Naive thymus-derived CD4-positive, alpha-beta T cell (primary cell): ENCODE measurements at regions of chr14 and their contacts with region 1.

Region 1: DNA sequence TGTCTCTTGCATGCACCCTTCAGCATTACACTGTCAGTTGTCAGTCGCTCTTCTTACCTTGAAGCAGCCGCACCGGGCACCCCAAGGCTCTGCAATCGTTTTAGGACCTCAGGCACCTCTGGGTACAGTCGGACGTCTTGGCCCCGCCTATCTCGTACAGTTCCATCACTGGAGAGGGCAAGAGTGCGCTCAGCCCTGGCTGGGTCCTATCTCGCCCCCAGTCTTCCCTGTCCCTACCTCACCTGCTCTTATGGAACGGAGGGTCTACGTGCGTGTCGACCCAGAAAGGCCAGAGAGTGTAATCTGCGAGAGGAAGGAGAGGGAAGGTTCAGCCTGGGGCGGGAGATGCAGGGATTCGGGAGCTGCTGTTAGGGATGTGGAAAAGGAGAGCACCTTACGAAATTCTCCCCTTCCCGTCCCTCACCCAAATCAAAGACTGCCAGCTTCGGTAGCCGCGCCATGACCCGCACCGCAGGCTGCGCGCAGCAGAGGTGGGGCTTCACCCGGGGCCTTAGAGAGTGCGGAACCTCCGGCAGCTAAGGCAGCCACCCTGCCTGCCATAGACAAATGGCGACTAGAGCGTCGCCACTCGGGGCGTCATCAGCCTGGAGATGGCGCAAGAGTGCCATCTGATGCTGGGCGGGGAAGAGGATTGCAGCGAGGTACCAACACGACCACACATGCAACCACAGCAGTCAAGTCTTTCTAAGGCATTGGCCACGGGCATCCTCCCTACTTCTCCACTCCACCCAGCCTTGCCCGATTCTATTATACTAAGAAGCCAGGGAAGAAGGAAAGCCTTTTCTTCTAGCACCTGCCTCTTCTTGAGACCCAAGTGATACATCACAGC is at the start of gene MDP1:
- DNase-seq: peak; percentile 75 to 89 (median 84)
- ATAC-seq: peak; percentile 85
- H3K4me3 ChIP-seq: peak within 1 kb of the TSS; percentile 95
- H3K4me3 Mint-ChIP-seq: peak within 1 kb of the TSS; percentile 89 to 97 (median 95)
- H3K27ac ChIP-seq: peak within 1 kb of the TSS; percentile 91
- H3K27ac Mint-ChIP-seq: peak within 1 kb of the TSS; percentile 80 to 99 (median 96)
- H3K4me1 ChIP-seq: peaks cover 31 to 36% of the 10 kb centered on the region in 2 donors
- H3K4me1 Mint-ChIP-seq: peaks cover 29 to 62% (median 54%) of the 10 kb centered on the region in 7 donors
- H3K27me3 ChIP-seq: no peaks in the 10 kb centered on the region
- H3K27me3 Mint-ChIP-seq: peaks cover 0 to 2% (median 0%) of the 10 kb centered on the region in 5 donors
- total RNA-seq, gene MDP1: 5.5 to 18.5 (median 14.2) TPM

Region 2: GRCh38 chr14:23877538-23878180 is 338.1 kb before region 1 on chr14:
- CTCF ChIA-PET with region 1: no interaction called
- POLR2A ChIA-PET with region 1: no interaction called
- intact Hi-C with region 1: no loop called
- DNase-seq: no peak
- ATAC-seq: no peak
- H3K4me3 ChIP-seq: no peak overlapping the region
- H3K4me3 Mint-ChIP-seq: no peak overlapping the region
- H3K27ac ChIP-seq: no peak overlapping the region
- H3K27ac Mint-ChIP-seq: peak overlapping the region in 1 of 9 donors; percentile 0
- H3K4me1 ChIP-seq: no peaks in the 10 kb centered on the region
- H3K4me1 Mint-ChIP-seq: no peaks in the 10 kb centered on the region
- H3K27me3 ChIP-seq: no peaks in the 10 kb centered on the region
- H3K27me3 Mint-ChIP-seq: peaks cover 0 to 23% (median 13%) of the 10 kb centered on the region in 5 donors

Region 3: GRCh38 chr14:24013654-24014514 is 201.8 kb before region 1 on chr14:
- CTCF ChIA-PET with region 1: no interaction called
- POLR2A ChIA-PET with region 1: no interaction called
- intact Hi-C with region 1: loop called in 1 of 2 experiments (anchors 10 kb)
- DNase-seq: peak in 8 of 9 donors; percentile 17 to 76 (median 67)
- ATAC-seq: peak; percentile 94
- H3K4me3 ChIP-seq: no peak overlapping the region
- H3K4me3 Mint-ChIP-seq: no peak overlapping the region
- H3K27ac ChIP-seq: no peak overlapping the region
- H3K27ac Mint-ChIP-seq: no peak overlapping the region
- H3K4me1 ChIP-seq: peaks cover 0 to 6% of the 10 kb centered on the region in 2 donors
- H3K4me1 Mint-ChIP-seq: peaks cover 8 to 28% (median 25%) of the 10 kb centered on the region in 7 donors
- H3K27me3 ChIP-seq: no peaks in the 10 kb centered on the region
- H3K27me3 Mint-ChIP-seq: peaks cover 0 to 15% (median 0%) of the 10 kb centered on the region in 5 donors

Region 4: DNA sequence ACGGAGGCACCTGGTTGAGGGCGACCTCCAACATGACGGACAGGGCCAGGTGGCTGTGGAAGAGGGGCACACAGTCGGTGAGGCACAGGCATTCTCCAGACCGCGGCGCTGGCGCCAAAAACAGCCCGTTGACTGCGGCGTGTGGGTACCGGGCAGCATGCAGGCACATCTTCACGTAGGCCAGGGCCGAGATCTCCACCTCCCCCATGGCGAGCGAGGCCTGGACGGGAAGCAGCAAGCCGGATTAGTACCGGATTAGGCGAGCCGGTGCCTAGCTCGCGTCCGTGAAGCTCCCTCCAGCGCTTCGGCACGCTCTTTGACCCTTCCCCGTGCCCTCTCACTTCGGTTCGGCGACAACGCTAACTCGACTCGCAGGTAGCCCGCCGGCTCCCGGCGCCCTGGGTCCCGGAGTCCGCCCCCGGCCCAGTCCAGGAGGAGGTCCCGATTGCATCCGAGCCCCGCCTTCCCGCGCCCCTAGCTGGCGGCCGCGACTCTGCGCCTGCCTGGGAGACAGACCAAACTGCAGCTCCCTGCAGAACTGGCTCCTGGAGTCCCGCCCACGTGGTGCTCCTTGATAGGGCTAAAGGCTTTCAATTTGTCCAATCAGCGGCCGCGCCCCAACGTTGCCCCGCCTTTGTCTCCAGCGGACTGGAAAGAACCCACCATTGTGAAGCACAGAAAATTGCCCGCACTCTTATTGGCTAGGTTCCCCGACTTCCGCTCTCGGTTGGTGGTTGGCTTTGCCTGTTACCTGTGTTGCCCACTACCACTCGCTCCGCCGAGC is 74.4 kb before region 1 on chr14 and contains the start of gene EMC9:
- CTCF ChIA-PET with region 1: interaction called, 3 read pairs
- POLR2A ChIA-PET with region 1: interaction called, 12 read pairs
- intact Hi-C with region 1: loop called (anchors 1 kb)
- DNase-seq: peak; percentile 90 to 100 (median 99)
- ATAC-seq: peak; percentile 94
- H3K4me3 ChIP-seq: peak within 1 kb of the TSS; percentile 87
- H3K4me3 Mint-ChIP-seq: peak within 1 kb of the TSS; percentile 85 to 100 (median 94)
- H3K27ac ChIP-seq: peak within 1 kb of the TSS; percentile 83
- H3K27ac Mint-ChIP-seq: peak within 1 kb of the TSS; percentile 83 to 96 (median 93)
- H3K4me1 ChIP-seq: peaks cover 33 to 43% of the 10 kb centered on the region in 2 donors
- H3K4me1 Mint-ChIP-seq: peaks cover 47 to 87% (median 77%) of the 10 kb centered on the region in 7 donors
- H3K27me3 ChIP-seq: no peaks in the 10 kb centered on the region
- H3K27me3 Mint-ChIP-seq: no peaks in the 10 kb centered on the region
- total RNA-seq, gene EMC9: 9.0 to 25.5 (median 22.3) TPM

Region 5: GRCh38 chr14:24195191-24196070 is 20.3 kb before region 1 on chr14 and contains the start of gene TM9SF1:
- CTCF ChIA-PET with region 1: interaction called, 5 read pairs
- POLR2A ChIA-PET with region 1: interaction called, 79 read pairs
- intact Hi-C with region 1: loop called (anchors 1 kb)
- DNase-seq: peak; percentile 86 to 92 (median 90)
- ATAC-seq: peak; percentile 90
- H3K4me3 ChIP-seq: peak within 1 kb of the TSS; percentile 74
- H3K4me3 Mint-ChIP-seq: peak within 1 kb of the TSS; percentile 88 to 97 (median 93)
- H3K27ac ChIP-seq: peak within 1 kb of the TSS; percentile 99
- H3K27ac Mint-ChIP-seq: peak within 1 kb of the TSS; percentile 88 to 98 (median 98)
- H3K4me1 ChIP-seq: peaks cover 14 to 16% of the 10 kb centered on the region in 2 donors
- H3K4me1 Mint-ChIP-seq: peaks cover 38 to 69% (median 59%) of the 10 kb centered on the region in 7 donors
- H3K27me3 ChIP-seq: no peaks in the 10 kb centered on the region
- H3K27me3 Mint-ChIP-seq: no peaks in the 10 kb centered on the region
- total RNA-seq, gene TM9SF1: 16.2 to 40.5 (median 19.2) TPM

Region 6: DNA sequence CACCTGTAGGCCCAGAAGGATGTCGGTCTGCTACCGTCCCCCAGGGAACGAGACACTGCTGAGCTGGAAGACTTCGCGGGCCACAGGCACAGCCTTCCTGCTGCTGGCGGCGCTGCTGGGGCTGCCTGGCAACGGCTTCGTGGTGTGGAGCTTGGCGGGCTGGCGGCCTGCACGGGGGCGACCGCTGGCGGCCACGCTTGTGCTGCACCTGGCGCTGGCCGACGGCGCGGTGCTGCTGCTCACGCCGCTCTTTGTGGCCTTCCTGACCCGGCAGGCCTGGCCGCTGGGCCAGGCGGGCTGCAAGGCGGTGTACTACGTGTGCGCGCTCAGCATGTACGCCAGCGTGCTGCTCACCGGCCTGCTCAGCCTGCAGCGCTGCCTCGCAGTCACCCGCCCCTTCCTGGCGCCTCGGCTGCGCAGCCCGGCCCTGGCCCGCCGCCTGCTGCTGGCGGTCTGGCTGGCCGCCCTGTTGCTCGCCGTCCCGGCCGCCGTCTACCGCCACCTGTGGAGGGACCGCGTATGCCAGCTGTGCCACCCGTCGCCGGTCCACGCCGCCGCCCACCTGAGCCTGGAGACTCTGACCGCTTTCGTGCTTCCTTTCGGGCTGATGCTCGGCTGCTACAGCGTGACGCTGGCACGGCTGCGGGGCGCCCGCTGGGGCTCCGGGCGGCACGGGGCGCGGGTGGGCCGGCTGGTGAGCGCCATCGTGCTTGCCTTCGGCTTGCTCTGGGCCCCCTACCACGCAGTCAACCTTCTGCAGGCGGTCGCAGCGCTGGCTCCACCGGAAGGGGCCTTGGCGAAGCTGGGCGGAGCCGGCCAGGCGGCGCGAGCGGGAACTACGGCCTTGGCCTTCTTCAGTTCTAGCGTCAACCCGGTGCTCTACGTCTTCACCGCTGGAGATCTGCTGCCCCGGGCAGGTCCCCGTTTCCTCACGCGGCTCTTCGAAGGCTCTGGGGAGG is 95.2 kb after region 1 on chr14 and contains the start of gene LTB4R:
- CTCF ChIA-PET with region 1: interaction called, 4 read pairs
- POLR2A ChIA-PET with region 1: interaction called, 14 read pairs
- intact Hi-C with region 1: loop called (anchors 1 kb)
- DNase-seq: peak; percentile 61 to 79 (median 73)
- ATAC-seq: peak; percentile 85
- H3K4me3 ChIP-seq: peak within 1 kb of the TSS; percentile 50
- H3K4me3 Mint-ChIP-seq: peak within 1 kb of the TSS; percentile 77 to 91 (median 85)
- H3K27ac ChIP-seq: peak within 1 kb of the TSS; percentile 76
- H3K27ac Mint-ChIP-seq: peak within 1 kb of the TSS; percentile 86 to 95 (median 89)
- H3K4me1 ChIP-seq: peaks cover 60 to 65% of the 10 kb centered on the region in 2 donors
- H3K4me1 Mint-ChIP-seq: peaks cover 58 to 79% (median 72%) of the 10 kb centered on the region in 7 donors
- H3K27me3 ChIP-seq: no peaks in the 10 kb centered on the region
- H3K27me3 Mint-ChIP-seq: no peaks in the 10 kb centered on the region
- total RNA-seq, gene LTB4R: 14.1 to 28.8 (median 26.3) TPM

Region 7: DNA sequence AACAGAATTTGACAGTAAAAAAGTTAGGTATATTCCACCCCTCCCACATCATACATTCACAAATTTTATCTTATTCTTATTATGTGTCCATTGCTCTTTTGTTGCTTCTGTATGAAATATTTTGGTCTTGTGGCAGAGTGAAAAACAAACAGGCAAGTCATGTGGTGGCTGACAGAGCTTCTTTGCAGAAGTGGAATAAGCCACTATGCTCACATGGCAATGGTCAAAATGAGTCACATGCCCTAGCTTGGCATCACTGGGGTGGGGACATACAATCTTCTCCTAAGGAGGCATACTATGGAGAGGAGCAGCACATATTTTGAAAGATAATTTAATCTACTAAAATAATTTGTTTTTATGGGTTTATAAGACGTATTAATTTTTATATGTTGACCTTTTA is 320.0 kb after region 1 on chr14:
- CTCF ChIA-PET with region 1: no interaction called
- POLR2A ChIA-PET with region 1: no interaction called
- intact Hi-C with region 1: no loop called
- DNase-seq: no peak
- ATAC-seq: peak; percentile 49
- H3K4me3 ChIP-seq: no peak overlapping the region
- H3K4me3 Mint-ChIP-seq: no peak overlapping the region
- H3K27ac ChIP-seq: no peak overlapping the region
- H3K27ac Mint-ChIP-seq: no peak overlapping the region
- H3K4me1 ChIP-seq: no peaks in the 10 kb centered on the region
- H3K4me1 Mint-ChIP-seq: peaks cover 0 to 7% (median 0%) of the 10 kb centered on the region in 7 donors
- H3K27me3 ChIP-seq: peaks cover 0 to 3% of the 10 kb centered on the region in 2 donors
- H3K27me3 Mint-ChIP-seq: peaks cover 7 to 36% (median 19%) of the 10 kb centered on the region in 5 donors

Region 8: DNA sequence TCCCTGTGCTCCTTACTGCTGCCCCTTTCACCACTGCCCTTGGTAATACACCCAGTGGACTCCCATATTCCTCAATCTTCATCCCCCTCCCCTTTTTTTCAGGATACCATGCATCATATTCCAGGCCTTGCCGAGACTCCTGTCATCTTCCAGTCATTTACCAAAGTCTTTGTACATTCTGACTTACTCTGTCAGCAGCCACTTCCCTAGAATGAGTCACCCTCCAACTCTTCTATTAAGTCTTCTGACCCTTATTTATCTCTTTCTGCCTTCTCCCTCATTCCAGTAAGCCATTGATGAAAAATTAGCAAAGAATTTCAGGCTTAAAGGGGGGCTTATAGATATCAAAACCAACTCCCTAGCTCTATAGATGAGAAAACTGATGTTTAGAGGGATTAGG is 706.2 kb after region 1 on chr14:
- CTCF ChIA-PET with region 1: no interaction called
- POLR2A ChIA-PET with region 1: no interaction called
- intact Hi-C with region 1: no loop called
- DNase-seq: no peak
- ATAC-seq: no peak
- H3K4me3 ChIP-seq: no peak overlapping the region
- H3K4me3 Mint-ChIP-seq: no peak overlapping the region
- H3K27ac ChIP-seq: no peak overlapping the region
- H3K27ac Mint-ChIP-seq: no peak overlapping the region
- H3K4me1 ChIP-seq: no peaks in the 10 kb centered on the region
- H3K4me1 Mint-ChIP-seq: no peaks in the 10 kb centered on the region
- H3K27me3 ChIP-seq: no peaks in the 10 kb centered on the region
- H3K27me3 Mint-ChIP-seq: peaks cover 9 to 57% (median 30%) of the 10 kb centered on the region in 5 donors